GM18951 (cell line): ENCODE measurements at regions of chr9 and their contacts with region 1.

Region 1: DNA sequence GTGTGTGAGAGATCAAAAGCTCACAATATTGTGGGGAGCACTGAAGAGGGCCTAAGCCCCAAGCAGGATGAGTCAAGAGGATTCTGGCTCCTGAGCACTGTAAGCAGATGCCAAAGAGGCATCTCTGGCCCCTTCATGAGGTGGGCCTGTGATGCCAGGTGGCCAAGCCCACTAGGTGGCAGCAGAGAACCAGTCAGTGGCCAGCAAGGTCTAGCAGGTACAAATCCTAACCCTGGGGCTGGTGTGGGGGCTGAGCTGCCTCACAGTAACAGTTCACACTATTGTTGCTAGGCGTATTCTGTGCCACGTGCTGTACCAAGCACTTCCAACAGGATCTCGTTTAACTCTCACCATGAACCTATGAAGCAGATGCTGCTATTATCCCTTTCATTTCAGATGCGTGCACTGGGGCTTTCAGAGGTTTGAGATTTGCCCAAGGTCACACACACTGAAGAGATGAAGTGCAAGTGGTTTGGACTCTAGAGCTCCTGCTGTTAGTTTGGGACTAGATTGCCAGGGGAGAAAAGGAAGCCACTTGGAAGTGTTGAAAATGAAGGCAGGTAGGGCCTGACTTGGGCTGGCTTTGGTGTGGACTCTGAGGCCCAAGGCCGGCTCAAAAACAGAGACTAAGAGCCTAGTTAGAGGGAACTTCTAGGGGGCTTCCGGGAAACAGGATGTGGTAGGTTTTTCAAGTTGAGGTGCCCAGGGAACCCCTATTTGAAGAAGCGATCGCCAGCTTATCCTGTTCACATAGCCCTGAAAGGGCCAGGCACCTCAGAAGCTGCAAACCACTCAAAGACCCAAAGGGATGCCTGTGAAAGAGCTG is 4.4 kb upstream of the MLANA start:
- POLR2A ChIP-seq: no peak

Region 2: GRCh38 chr9:6328103-6328502 is 441.8 kb after region 1 on chr9 and contains the start of gene TPD52L3:
- in situ Hi-C with region 1: loop called (anchors 10 kb)
- POLR2A ChIP-seq: no peak